ENCODE measurements at regions of chrX and their contacts with region 1.

Region 1: GRCh38 chrX:110317820-110318658 is at the start of gene AMMECR1:
- DNase-seq: peak; percentile 73 to 84 (median 78)
- ATAC-seq: peak; percentile 97
- H3K4me3 ChIP-seq: peak within 1 kb of the TSS; percentile 83
- H3K4me3 Mint-ChIP-seq: peak within 1 kb of the TSS; percentile 88 to 95 (median 93)
- H3K27ac ChIP-seq: peak within 1 kb of the TSS; percentile 92
- H3K27ac Mint-ChIP-seq: peak within 1 kb of the TSS; percentile 87 to 97 (median 94)
- H3K4me1 ChIP-seq: peaks cover 0 to 6% of the 10 kb centered on the region in 2 donors
- H3K4me1 Mint-ChIP-seq: peaks cover 6 to 31% (median 22%) of the 10 kb centered on the region in 7 donors
- H3K27me3 ChIP-seq: no peaks in the 10 kb centered on the region
- H3K27me3 Mint-ChIP-seq: peaks cover 0 to 14% (median 0%) of the 10 kb centered on the region in 5 donors
- total RNA-seq, gene AMMECR1: 11.6 to 16.7 (median 15.3) TPM

Region 2: GRCh38 chrX:109536439-109537336 is 781.4 kb before region 1 on chrX and contains the start of gene NXT2:
- CTCF ChIA-PET with region 1: no interaction called
- POLR2A ChIA-PET with region 1: no interaction called
- intact Hi-C with region 1: loop called in 1 of 2 experiments (anchors 5 kb)
- DNase-seq: peak; percentile 64 to 89 (median 83)
- ATAC-seq: peak; percentile 100
- H3K4me3 ChIP-seq: peak within 1 kb of the TSS; percentile 87
- H3K4me3 Mint-ChIP-seq: peak within 1 kb of the TSS; percentile 79 to 98 (median 95)
- H3K27ac ChIP-seq: peak within 1 kb of the TSS; percentile 87
- H3K27ac Mint-ChIP-seq: peak within 1 kb of the TSS; percentile 92 to 99 (median 98)
- H3K4me1 ChIP-seq: peaks cover 0 to 3% of the 10 kb centered on the region in 2 donors
- H3K4me1 Mint-ChIP-seq: peaks cover 0 to 14% (median 8%) of the 10 kb centered on the region in 7 donors
- H3K27me3 ChIP-seq: no peaks in the 10 kb centered on the region
- H3K27me3 Mint-ChIP-seq: peaks cover 0 to 19% (median 12%) of the 10 kb centered on the region in 5 donors
- total RNA-seq, gene NXT2: 5.7 to 13.5 (median 7.7) TPM

Region 3: GRCh38 chrX:110002300-110003166 is 315.5 kb before region 1 on chrX and contains the start of gene TMEM164:
- CTCF ChIA-PET with region 1: no interaction called
- POLR2A ChIA-PET with region 1: no interaction called
- intact Hi-C with region 1: loop called (anchors 1 to 10 kb)
- DNase-seq: peak; percentile 58 to 82 (median 75)
- ATAC-seq: peak; percentile 87
- H3K4me3 ChIP-seq: peak within 1 kb of the TSS; percentile 54
- H3K4me3 Mint-ChIP-seq: peak within 1 kb of the TSS; percentile 76 to 96 (median 88)
- H3K27ac ChIP-seq: peak within 1 kb of the TSS; percentile 64
- H3K27ac Mint-ChIP-seq: peak within 1 kb of the TSS; percentile 82 to 95 (median 88)
- H3K4me1 ChIP-seq: no peaks in the 10 kb centered on the region
- H3K4me1 Mint-ChIP-seq: peaks cover 14 to 42% (median 34%) of the 10 kb centered on the region in 7 donors
- H3K27me3 ChIP-seq: no peaks in the 10 kb centered on the region
- H3K27me3 Mint-ChIP-seq: no peaks in the 10 kb centered on the region
- total RNA-seq, gene TMEM164: 16.3 to 30.1 (median 17.9) TPM

Region 4: GRCh38 chrX:110167952-110168451 is 150.0 kb before region 1 on chrX:
- CTCF ChIA-PET with region 1: no interaction called
- POLR2A ChIA-PET with region 1: interaction called, 3 read pairs
- intact Hi-C with region 1: loop called in 1 of 2 experiments (anchors 1 kb)
- DNase-seq: peak; percentile 9 to 53 (median 32)
- ATAC-seq: peak; percentile 63
- H3K4me3 ChIP-seq: no peak overlapping the region
- H3K4me3 Mint-ChIP-seq: no peak overlapping the region
- H3K27ac ChIP-seq: no peak overlapping the region
- H3K27ac Mint-ChIP-seq: no peak overlapping the region
- H3K4me1 ChIP-seq: no peaks in the 10 kb centered on the region
- H3K4me1 Mint-ChIP-seq: peaks cover 0 to 7% (median 0%) of the 10 kb centered on the region in 7 donors
- H3K27me3 ChIP-seq: no peaks in the 10 kb centered on the region
- H3K27me3 Mint-ChIP-seq: no peaks in the 10 kb centered on the region

Region 5: GRCh38 chrX:110212290-110212689 is 105.7 kb before region 1 on chrX:
- CTCF ChIA-PET with region 1: no interaction called
- POLR2A ChIA-PET with region 1: interaction called, 5 read pairs
- intact Hi-C with region 1: loop called in 1 of 2 experiments (anchors 1 kb)
- DNase-seq: no peak
- ATAC-seq: no peak
- H3K4me3 ChIP-seq: no peak overlapping the region
- H3K4me3 Mint-ChIP-seq: no peak overlapping the region
- H3K27ac ChIP-seq: no peak overlapping the region
- H3K27ac Mint-ChIP-seq: no peak overlapping the region
- H3K4me1 ChIP-seq: peaks cover 0 to 3% of the 10 kb centered on the region in 2 donors
- H3K4me1 Mint-ChIP-seq: peaks cover 3 to 17% (median 10%) of the 10 kb centered on the region in 7 donors
- H3K27me3 ChIP-seq: no peaks in the 10 kb centered on the region
- H3K27me3 Mint-ChIP-seq: no peaks in the 10 kb centered on the region

Region 6: DNA sequence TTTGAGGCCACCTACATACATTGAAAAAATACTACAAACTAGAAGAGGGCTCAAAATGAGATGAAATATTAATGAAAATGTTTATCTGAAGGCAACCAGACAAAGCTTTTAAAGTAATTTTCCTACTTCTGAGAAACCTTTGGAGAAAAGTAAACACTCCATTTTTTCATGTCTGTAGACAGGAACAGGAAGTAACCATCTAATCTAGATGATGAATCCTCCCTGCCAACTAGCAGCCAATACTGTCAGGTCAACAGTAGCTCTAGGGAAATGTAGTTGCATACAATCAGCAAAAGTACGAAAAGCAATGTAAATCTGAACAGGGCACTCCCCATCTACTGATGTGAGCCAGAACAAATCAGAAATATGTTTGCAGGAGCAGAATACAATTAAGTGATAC is 49.2 kb before region 1 on chrX:
- CTCF ChIA-PET with region 1: interaction called, 4 read pairs
- POLR2A ChIA-PET with region 1: interaction called, 3 read pairs
- intact Hi-C with region 1: loop called (anchors 5 kb)
- DNase-seq: peak in 1 of 9 donors; percentile 5
- ATAC-seq: no peak
- H3K4me3 ChIP-seq: no peak overlapping the region
- H3K4me3 Mint-ChIP-seq: peak overlapping the region in 4 of 10 donors; percentile 21 to 68 (median 52)
- H3K27ac ChIP-seq: no peak overlapping the region
- H3K27ac Mint-ChIP-seq: peak overlapping the region in 7 of 9 donors; percentile 10 to 90 (median 86)
- H3K4me1 ChIP-seq: peaks cover 0 to 10% of the 10 kb centered on the region in 2 donors
- H3K4me1 Mint-ChIP-seq: peaks cover 17 to 60% (median 33%) of the 10 kb centered on the region in 7 donors
- H3K27me3 ChIP-seq: no peaks in the 10 kb centered on the region
- H3K27me3 Mint-ChIP-seq: no peaks in the 10 kb centered on the region

Region 7: GRCh38 chrX:111071542-111072277 is 753.7 kb after region 1 on chrX:
- CTCF ChIA-PET with region 1: no interaction called
- POLR2A ChIA-PET with region 1: no interaction called
- intact Hi-C with region 1: no loop called
- DNase-seq: no peak
- ATAC-seq: no peak
- H3K4me3 ChIP-seq: no peak overlapping the region
- H3K4me3 Mint-ChIP-seq: no peak overlapping the region
- H3K27ac ChIP-seq: no peak overlapping the region
- H3K27ac Mint-ChIP-seq: no peak overlapping the region
- H3K4me1 ChIP-seq: no peaks in the 10 kb centered on the region
- H3K4me1 Mint-ChIP-seq: no peaks in the 10 kb centered on the region
- H3K27me3 ChIP-seq: no peaks in the 10 kb centered on the region
- H3K27me3 Mint-ChIP-seq: peaks cover 0 to 3% (median 0%) of the 10 kb centered on the region in 5 donors

Region 8: GRCh38 chrX:111680988-111681779 is 1363.1 kb after region 1 on chrX and contains the start of gene ALG13:
- CTCF ChIA-PET with region 1: no interaction called
- POLR2A ChIA-PET with region 1: no interaction called
- intact Hi-C with region 1: loop called in 1 of 2 experiments (anchors 5 kb)
- DNase-seq: peak; percentile 70 to 94 (median 89)
- ATAC-seq: peak; percentile 93
- H3K4me3 ChIP-seq: peak within 1 kb of the TSS; percentile 57
- H3K4me3 Mint-ChIP-seq: peak within 1 kb of the TSS; percentile 87 to 94 (median 89)
- H3K27ac ChIP-seq: peak within 1 kb of the TSS; percentile 98
- H3K27ac Mint-ChIP-seq: peak within 1 kb of the TSS; percentile 92 to 99 (median 98)
- H3K4me1 ChIP-seq: peaks cover 7 to 15% of the 10 kb centered on the region in 2 donors
- H3K4me1 Mint-ChIP-seq: peaks cover 14 to 44% (median 32%) of the 10 kb centered on the region in 7 donors
- H3K27me3 ChIP-seq: no peaks in the 10 kb centered on the region
- H3K27me3 Mint-ChIP-seq: no peaks in the 10 kb centered on the region
- total RNA-seq, gene ALG13: 48.4 to 223 (median 92.3) TPM

Measured in naive thymus-derived CD4-positive, alpha-beta T cell (primary cell).